Sciatic nerve (tissue), 2 donors: ENCODE measurements at regions of chr2 and their contacts with region 1.

Region 1: DNA sequence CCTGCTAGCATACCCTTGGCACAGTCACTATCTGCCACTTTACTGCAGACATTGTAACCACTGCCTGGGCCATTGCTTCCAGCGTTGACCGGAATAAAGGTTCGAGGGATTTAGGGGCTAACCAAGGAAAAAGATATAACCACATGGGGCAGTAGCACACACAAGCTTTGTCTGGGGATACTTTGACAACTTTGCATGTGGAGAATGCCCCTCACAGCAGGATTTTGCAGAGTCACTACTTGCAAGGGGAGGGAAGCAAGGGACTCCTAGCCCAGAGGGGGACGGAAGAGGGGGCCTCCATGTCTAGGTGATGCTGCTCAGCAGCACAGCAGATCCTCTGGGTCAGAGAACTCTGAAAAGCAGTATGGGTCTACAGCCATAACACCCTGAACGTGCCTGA is 138.7 kb downstream of the SPP2 start:
- DNase-seq: no peak
- ATAC-seq: no peak

Region 2: GRCh38 chr2:233700028-233700635 is 489.1 kb before region 1 on chr2:
- intact Hi-C with region 1: no loop called
- DNase-seq: no peak
- ATAC-seq: no peak

Region 3: DNA sequence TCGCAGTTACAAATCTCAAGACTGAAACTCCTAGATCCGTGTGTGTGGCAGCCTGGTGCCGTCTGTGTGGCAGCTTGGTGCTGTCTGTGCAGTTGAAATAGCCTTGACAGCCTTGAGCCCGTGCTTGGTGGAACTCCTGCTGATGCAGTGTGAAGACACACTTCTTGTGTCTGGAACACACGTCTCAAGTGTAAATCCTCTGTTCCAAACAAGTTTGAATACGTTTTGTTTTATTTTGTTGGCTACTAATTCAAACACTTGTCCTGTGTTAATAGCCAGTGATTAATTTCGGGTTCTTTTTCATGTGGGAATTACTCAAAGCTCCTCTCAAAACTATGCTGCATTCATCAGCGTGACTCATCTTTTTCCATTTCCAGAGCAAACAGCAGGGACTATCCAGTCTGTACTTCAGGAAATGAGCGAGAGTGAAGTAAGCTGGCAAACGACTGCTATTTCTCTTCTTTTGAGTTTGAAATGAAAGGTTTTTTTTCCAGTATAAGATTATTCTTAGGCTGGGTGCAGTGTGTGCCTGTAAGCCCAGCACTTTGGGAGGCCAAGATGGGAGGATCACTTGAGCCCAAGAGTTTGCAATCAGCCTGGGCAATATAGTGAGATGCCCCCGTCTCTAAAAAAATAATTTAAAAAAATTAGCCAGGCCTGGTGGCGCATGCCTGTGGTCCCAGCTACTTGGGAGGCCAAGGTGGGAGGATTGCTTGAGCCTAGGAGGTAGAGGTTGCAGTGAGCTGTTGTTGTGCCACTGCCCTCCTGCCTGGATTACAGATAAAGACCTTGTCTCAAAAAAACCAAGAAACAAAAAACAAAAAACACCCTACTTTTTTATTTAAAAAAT is 14.1 kb after region 1 on chr2:
- intact Hi-C with region 1: loop called (anchors 1 kb)
- DNase-seq: no peak
- ATAC-seq: peak; percentile 90

Region 4: GRCh38 chr2:234650911-234651310 is 461.7 kb after region 1 on chr2:
- intact Hi-C with region 1: no loop called
- DNase-seq: no peak
- ATAC-seq: no peak